ENCODE measurements at regions of chr10 and their contacts with region 1.

Region 1: DNA sequence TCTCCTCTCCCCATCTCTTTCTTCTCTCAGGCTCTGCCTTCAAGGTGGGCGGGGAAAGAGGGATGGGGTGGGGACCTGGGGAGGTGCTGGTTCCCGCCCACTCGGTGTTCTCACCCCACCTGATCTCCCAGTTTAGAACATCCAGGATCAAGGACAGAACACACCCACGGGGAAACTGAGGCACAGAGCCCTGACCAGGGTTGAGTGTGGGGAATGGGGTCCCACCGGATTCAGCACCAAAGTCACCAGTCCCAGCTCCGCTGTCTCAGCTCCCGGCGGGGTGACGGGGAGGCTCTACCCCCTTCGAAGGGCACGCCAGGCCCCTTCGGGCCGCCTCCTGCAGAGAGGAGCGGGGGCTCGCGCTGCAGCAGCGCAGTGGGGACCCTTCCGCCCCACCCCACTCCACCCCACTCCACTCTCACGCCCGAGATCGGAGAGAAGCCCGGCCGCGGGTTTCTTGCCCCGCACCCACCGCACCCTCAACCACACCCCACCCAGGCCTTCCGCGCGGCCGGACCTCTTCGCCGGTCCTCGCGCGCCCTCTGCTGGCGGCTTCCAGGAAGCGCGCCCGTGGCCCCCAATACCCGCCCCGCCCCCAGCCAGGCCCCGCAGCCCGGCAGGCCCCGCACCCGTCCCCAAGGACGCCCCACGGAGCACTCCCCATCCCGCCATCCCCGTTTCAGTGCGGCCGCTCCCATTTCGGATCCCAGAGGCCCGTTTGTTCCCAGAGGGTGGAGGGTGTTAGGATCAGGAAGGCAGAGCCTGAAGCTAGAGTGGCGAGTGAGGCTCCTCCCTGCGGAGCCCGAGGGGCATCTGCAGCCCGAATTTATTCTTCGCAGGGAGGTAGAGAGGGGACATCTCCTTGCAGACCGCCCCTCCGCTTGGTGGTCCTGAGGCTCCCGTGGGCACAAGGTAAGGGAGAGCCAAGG is 18.0 kb downstream of the POLL start:
- DNase-seq: peak; percentile 86 to 88
- ATAC-seq: peak; percentile 90 to 98 (median 94)
- H3K4me3 ChIP-seq: peak overlapping the region; percentile 62
- H3K4me3 Mint-ChIP-seq: peak overlapping the region; percentile 55
- H3K27ac ChIP-seq: no peak overlapping the region
- H3K27ac Mint-ChIP-seq: no peak overlapping the region
- H3K4me1 ChIP-seq: peaks cover 18% of the 10 kb centered on the region
- H3K4me1 Mint-ChIP-seq: peaks cover 6 to 15% of the 10 kb centered on the region in 2 donors
- H3K27me3 ChIP-seq: peaks cover 32% of the 10 kb centered on the region
- H3K27me3 Mint-ChIP-seq: peaks cover 34 to 38% of the 10 kb centered on the region in 2 donors
- CTCF ChIP-seq: peak; percentile 85

Region 2: GRCh38 chr10:101161494-101162299 is 408.4 kb before region 1 on chr10:
- intact Hi-C with region 1: loop called (anchors 1 kb)
- DNase-seq: peak; percentile 59 to 90
- ATAC-seq: peak; percentile 87 to 98 (median 98)
- H3K4me3 ChIP-seq: no peak overlapping the region
- H3K4me3 Mint-ChIP-seq: no peak overlapping the region
- H3K27ac ChIP-seq: no peak overlapping the region
- H3K27ac Mint-ChIP-seq: no peak overlapping the region
- H3K4me1 ChIP-seq: peaks cover 7% of the 10 kb centered on the region
- H3K4me1 Mint-ChIP-seq: peaks cover 18 to 20% of the 10 kb centered on the region in 2 donors
- H3K27me3 ChIP-seq: peaks cover 21% of the 10 kb centered on the region
- H3K27me3 Mint-ChIP-seq: peaks cover 31 to 66% of the 10 kb centered on the region in 2 donors
- CTCF ChIP-seq: peak; percentile 96

Region 3: DNA sequence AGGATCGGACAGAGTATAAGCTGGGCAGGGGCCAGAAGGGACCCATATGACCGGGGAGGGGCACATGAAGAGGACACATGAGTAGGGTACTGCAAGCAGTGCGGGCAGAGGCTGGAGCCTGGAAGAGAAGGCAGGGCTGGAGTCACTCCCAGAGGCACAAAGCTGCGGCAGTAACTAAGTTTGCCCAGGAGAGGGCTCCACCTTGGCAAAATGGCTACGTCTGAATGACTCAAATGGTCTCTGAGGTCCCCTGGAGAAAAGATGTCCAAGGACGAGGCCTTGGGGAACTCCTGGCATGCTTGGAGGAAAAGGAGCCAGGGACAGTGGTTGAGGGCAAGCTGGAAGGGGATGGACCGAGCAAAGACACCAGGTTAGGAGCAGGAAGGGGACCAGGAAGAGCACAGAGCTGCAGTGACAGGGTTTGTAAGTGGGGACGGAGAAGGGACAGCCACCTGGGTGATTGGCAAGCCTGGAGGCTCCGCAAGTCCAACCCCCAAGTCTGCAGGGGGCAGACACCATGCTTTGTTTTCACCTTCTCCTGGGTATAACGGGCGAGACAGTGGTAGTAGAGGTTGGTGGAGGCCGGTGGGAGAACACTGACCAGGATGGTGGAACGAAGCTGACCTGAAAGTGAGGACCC is 297.8 kb before region 1 on chr10:
- intact Hi-C with region 1: loop called (anchors 1 kb)
- DNase-seq: peak; percentile 41 to 75
- ATAC-seq: peak; percentile 48 to 75 (median 74)
- H3K4me3 ChIP-seq: no peak overlapping the region
- H3K4me3 Mint-ChIP-seq: no peak overlapping the region
- H3K27ac ChIP-seq: no peak overlapping the region
- H3K27ac Mint-ChIP-seq: no peak overlapping the region
- H3K4me1 ChIP-seq: peaks cover 4% of the 10 kb centered on the region
- H3K4me1 Mint-ChIP-seq: peaks cover 5 to 7% of the 10 kb centered on the region in 2 donors
- H3K27me3 ChIP-seq: peaks cover 4% of the 10 kb centered on the region
- H3K27me3 Mint-ChIP-seq: peaks cover 25 to 48% of the 10 kb centered on the region in 2 donors
- CTCF ChIP-seq: peak; percentile 66

Region 4: GRCh38 chr10:101536800-101537199 is 33.3 kb before region 1 on chr10:
- intact Hi-C with region 1: loop called (anchors 1 kb)
- DNase-seq: peak in 1 of 2 donors; percentile 58
- ATAC-seq: peak in 1 of 3 donors; percentile 48
- H3K4me3 ChIP-seq: no peak overlapping the region
- H3K4me3 Mint-ChIP-seq: no peak overlapping the region
- H3K27ac ChIP-seq: no peak overlapping the region
- H3K27ac Mint-ChIP-seq: no peak overlapping the region
- H3K4me1 ChIP-seq: no peaks in the 10 kb centered on the region
- H3K4me1 Mint-ChIP-seq: peaks cover 0 to 8% of the 10 kb centered on the region in 2 donors
- H3K27me3 ChIP-seq: no peaks in the 10 kb centered on the region
- H3K27me3 Mint-ChIP-seq: no peaks in the 10 kb centered on the region
- CTCF ChIP-seq: peak; percentile 63

Measured in natural killer cell (primary cell).